ENCODE measurements at regions of chr14 and their contacts with region 1.

Region 1: DNA sequence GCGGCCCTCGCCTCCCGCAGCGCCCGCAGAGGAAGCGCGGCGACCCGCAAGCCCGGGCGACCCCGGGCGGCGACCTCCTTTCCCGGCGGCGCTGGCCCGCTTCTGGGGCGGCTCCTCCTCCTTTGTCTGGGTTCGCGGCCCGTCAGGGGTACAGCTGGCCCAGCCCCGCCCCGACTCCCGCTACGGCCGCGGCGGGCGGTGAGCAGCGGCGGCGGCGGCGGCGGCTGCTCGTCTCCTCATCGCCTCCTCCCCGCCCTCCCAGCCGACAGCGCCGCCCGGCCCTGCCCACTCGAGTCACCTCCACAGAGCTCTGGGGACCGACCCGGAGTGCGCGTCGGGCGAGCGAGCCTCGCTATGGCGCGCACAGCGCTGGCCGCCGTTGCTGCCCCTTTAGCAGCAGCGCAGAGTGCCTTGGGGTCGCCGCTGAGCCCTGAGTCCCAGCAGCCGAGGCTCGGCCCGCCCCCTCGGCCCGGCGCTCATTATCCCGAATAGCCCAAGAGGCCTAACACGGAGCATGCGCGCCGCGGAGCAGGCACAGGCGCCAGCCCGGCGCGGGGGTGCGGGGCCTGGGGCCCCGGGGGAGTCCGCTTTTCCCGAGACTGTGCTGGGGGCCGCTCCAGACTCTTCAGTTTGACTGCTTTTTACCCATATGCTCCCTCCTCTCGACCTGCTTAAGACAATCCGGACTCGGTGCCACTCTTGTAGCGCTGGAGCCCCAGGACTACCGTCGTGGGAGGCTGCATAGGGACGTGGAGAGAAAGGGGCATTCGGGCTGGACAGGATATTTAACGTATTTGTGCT is at the start of gene SOS2:
- DNase-seq: peak; percentile 83
- H3K4me3 Mint-ChIP-seq: peak within 1 kb of the TSS; percentile 76
- H3K27ac Mint-ChIP-seq: peak within 1 kb of the TSS; percentile 87
- H3K4me1 Mint-ChIP-seq: peaks cover 33% of the 10 kb centered on the region
- H3K27me3 Mint-ChIP-seq: no peaks in the 10 kb centered on the region
- total RNA-seq, gene SOS2: 20.3 to 22.1 TPM

Region 2: DNA sequence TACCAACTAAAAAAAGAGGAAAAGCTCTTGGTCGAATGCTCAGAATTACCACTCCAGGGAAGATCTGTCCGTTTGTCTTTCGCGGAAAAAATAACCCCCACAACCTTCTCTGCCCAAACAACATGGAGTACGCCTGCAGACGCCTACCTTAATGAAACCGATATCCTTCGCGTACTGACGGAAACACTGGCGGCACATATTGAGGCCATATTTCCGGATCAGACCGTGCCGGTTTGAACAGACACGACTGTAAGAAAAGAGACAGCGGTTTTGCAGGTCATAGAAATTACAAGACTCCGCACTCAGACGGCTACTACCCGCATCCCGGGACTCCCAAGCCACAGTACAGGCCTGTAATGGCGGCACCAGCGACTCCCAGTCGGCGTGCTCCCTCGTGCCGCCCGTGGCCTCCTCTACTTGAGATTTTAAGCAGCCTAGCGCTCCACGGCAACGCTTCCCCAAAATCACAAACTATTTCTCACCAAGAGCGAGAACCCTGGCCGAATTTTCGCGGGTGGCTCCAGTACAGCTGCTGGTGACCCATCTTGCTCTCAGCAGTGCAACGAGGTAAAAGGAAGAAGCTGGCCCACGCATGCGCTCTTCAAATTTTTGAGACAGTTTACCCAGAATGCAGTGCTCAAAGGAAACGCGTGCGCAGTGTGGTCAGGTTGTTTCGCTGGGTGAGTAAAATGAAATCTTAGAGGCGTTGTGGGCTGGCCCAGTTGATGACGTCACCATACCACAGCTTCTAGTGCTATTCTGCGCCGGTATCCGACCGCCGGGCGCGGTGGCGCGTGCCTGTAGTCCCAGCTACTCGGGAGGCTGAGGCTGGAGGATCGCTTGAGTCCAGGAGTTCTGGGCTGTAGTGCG is 645.6 kb before region 1 on chr14 and contains the start of gene RPS29:
- CTCF ChIA-PET with region 1: no interaction called
- intact Hi-C with region 1: loop called (anchors 1 kb)
- DNase-seq: peak; percentile 99
- H3K4me3 Mint-ChIP-seq: peak within 1 kb of the TSS; percentile 87
- H3K27ac Mint-ChIP-seq: peak within 1 kb of the TSS; percentile 98
- H3K4me1 Mint-ChIP-seq: peaks cover 40% of the 10 kb centered on the region
- H3K27me3 Mint-ChIP-seq: peaks cover 3% of the 10 kb centered on the region
- total RNA-seq, gene RPS29: 1,858 to 2,382 TPM

Region 3: DNA sequence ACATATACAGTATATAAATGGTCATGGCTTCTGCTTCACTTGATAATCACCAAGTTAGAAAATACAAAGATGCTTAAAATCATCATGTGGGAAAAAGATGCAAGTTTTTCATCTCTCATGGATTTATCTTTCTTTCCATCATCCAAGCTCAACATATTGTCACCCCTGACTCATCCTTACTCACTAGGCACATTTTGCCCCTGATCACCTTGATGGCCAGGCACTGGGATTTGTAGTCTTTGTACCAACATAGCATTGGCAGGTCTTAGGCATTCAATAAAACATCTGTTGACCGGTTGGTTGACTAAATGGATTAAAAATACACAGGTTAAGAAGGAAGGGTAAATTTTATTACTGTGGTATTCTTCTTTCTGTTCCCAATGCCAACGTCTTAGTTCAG is 435.6 kb before region 1 on chr14:
- CTCF ChIA-PET with region 1: no interaction called
- intact Hi-C with region 1: no loop called
- DNase-seq: no peak
- H3K4me3 Mint-ChIP-seq: no peak overlapping the region
- H3K27ac Mint-ChIP-seq: peak overlapping the region; percentile 16
- H3K4me1 Mint-ChIP-seq: no peaks in the 10 kb centered on the region
- H3K27me3 Mint-ChIP-seq: no peaks in the 10 kb centered on the region

Region 4: DNA sequence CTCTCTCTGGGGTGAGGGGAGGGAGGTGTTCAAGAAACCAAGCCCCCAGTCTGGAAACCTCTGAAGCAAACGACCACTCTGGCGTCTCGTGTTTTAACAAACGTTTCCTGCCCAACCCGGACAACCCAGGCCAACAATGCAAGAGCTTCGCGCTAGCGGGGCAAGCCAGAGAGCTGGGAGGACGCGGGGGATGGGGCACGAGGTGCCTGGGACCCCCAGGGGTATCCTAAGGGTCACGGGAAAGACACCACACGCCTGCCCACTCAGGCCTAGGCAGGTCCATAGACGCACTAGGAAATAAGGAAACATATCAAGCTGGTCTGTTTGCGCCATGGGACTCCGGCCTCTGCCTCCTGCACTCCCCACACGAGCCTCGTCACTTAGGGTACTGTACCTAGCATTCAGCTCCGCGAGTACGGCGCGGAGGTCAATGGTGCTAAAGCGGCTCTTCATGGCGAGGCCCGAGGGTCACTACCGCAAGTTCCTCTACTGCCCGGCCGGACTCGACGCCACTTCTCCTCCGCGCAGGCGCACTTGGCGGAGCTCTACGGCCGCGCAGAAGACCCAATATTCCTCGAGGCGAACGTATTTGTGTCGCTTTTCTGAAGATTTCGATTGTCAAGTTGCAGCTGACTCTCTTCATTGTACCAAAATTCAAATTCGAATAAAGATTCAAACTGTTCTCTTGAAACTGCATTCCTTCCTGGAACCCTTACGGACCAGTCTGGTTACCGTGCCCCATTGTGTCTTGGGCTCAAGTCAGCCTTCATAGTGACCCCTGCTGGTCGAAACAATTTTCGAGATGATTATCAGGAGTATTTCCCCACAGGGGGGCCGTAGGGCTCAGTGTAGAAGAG is 379.1 kb before region 1 on chr14 and contains the start of gene NEMF:
- CTCF ChIA-PET with region 1: interaction called, 3 read pairs
- intact Hi-C with region 1: loop called (anchors 2 kb)
- DNase-seq: peak; percentile 90
- H3K4me3 Mint-ChIP-seq: peak within 1 kb of the TSS; percentile 98
- H3K27ac Mint-ChIP-seq: peak within 1 kb of the TSS; percentile 97
- H3K4me1 Mint-ChIP-seq: peaks cover 37% of the 10 kb centered on the region
- H3K27me3 Mint-ChIP-seq: no peaks in the 10 kb centered on the region
- total RNA-seq, gene NEMF: 45.5 to 47.0 TPM

Region 5: GRCh38 chr14:50060871-50061663 is 170.6 kb before region 1 on chr14:
- CTCF ChIA-PET with region 1: no interaction called
- intact Hi-C with region 1: loop called (anchors 1 kb)
- DNase-seq: peak; percentile 64
- H3K4me3 Mint-ChIP-seq: peak overlapping the region; percentile 85
- H3K27ac Mint-ChIP-seq: peak overlapping the region; percentile 98
- H3K4me1 Mint-ChIP-seq: peaks cover 75% of the 10 kb centered on the region
- H3K27me3 Mint-ChIP-seq: no peaks in the 10 kb centered on the region

Region 6: DNA sequence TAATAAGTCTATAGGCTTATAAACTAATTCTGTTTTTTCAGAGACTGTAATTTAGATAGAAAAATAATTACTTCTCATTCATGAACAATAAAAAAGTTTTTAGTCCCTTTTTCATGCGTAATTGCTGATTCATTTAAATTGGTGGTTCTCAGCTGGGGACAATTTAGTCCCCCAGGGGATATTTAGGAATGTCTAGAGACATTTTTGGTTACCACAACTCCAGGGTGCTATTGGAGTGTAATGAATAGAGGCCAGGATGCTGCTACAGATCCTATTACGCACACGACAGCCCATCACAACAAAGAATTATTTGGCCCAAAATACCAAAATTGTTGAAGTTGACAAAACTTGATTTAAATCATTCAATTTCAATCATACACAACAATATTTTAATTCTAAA is 92.5 kb before region 1 on chr14:
- CTCF ChIA-PET with region 1: no interaction called
- intact Hi-C with region 1: no loop called
- DNase-seq: no peak
- H3K4me3 Mint-ChIP-seq: no peak overlapping the region
- H3K27ac Mint-ChIP-seq: no peak overlapping the region
- H3K4me1 Mint-ChIP-seq: no peaks in the 10 kb centered on the region
- H3K27me3 Mint-ChIP-seq: no peaks in the 10 kb centered on the region

Region 7: GRCh38 chr14:50342221-50343078 is 110.8 kb after region 1 on chr14:
- CTCF ChIA-PET with region 1: no interaction called
- intact Hi-C with region 1: loop called (anchors 1 kb)
- DNase-seq: peak; percentile 79
- H3K4me3 Mint-ChIP-seq: no peak overlapping the region
- H3K27ac Mint-ChIP-seq: no peak overlapping the region
- H3K4me1 Mint-ChIP-seq: peaks cover 26% of the 10 kb centered on the region
- H3K27me3 Mint-ChIP-seq: no peaks in the 10 kb centered on the region

Region 8: DNA sequence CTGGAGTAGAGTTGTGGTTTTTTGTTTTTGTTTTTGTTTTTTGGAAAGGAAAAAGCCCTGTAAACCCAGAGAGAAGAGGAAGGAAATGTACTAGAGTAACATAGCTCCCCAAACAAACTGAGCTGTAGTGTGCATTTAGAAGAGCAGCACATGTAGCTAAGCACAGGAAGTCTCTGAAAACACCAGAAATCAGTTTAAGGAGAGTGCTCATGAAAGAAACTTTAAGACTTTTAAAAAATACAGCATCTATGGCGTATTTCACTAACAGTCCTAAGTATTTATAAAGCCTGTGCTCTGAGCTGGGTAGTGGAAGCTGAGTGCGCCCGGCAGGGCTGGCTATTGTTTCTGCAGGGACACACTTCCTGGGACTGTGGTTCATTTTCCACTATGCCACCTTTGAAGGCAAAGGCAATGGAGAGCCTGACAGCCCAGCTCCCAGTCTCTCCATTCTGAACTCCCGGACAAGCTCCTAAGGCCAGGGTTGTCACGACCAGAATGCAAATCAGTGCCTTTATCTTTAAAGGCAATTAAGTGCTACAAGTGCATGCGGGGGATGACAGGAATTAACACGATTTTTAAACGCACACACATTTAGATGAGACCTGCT is 553.9 kb after region 1 on chr14:
- CTCF ChIA-PET with region 1: no interaction called
- intact Hi-C with region 1: loop called (anchors 5 kb)
- DNase-seq: no peak
- H3K4me3 Mint-ChIP-seq: no peak overlapping the region
- H3K27ac Mint-ChIP-seq: no peak overlapping the region
- H3K4me1 Mint-ChIP-seq: peaks cover 66% of the 10 kb centered on the region
- H3K27me3 Mint-ChIP-seq: no peaks in the 10 kb centered on the region

Measured in activated naive CD4-positive, alpha-beta T cell treated with anti-CD3 and anti-CD28 coated beads for 36 hours (primary cell).